Colonic mucosa (tissue), 4 donors: ENCODE measurements at regions of chr7 and their contacts with region 1.

Region 1: GRCh38 chr7:70972693-70973092 is 159.3 kb upstream of the GALNT17 start:
- DNase-seq: no peak
- H3K4me3 ChIP-seq: no peak overlapping the region
- H3K27ac ChIP-seq: no peak overlapping the region
- H3K4me1 ChIP-seq: no peaks in the 10 kb centered on the region
- H3K27me3 ChIP-seq: no peaks in the 10 kb centered on the region
- CTCF ChIP-seq: no peak

Region 2: DNA sequence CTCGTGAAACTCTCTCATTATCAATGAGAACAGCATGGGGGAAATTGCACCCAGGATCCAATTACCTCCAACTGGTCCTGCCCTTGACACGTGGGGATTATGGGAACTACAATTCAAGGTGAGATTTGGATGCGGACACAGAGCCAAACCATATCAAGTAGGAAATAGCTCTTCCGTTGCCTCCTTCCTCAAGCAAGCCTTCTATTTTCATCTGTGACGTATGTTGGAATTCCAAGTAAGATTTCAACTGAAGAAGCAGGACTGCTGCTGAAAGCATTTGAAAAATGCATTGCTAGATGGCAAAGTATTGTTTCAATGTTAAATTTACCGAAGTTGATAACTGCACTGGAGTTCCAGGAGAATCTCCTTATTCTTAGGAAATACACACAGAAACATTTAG is 18.9 kb before region 1 on chr7:
- intact Hi-C with region 1: loop called (anchors 2 kb)
- DNase-seq: no peak
- H3K4me3 ChIP-seq: no peak overlapping the region
- H3K27ac ChIP-seq: no peak overlapping the region
- H3K4me1 ChIP-seq: no peaks in the 10 kb centered on the region
- H3K27me3 ChIP-seq: no peaks in the 10 kb centered on the region
- CTCF ChIP-seq: no peak